K562 (cell line): ENCODE measurements at regions of chr6 and their contacts with region 1.

Region 1: GRCh38 chr6:144013486-144013909 is 5.4 kb upstream of the PLAGL1 start:
- DNase-seq: peak; percentile 61 to 88 (median 64)
- ATAC-seq: peak; percentile 92
- H3K4me3 ChIP-seq: no peak overlapping the region
- H3K27ac ChIP-seq: no peak overlapping the region
- H3K4me1 ChIP-seq: peaks cover 0 to 1% of the 10 kb centered on the region in 2 experiments; a peak in 1 of 5 replicates
- H3K27me3 ChIP-seq: peaks cover 0 to 2% of the 10 kb centered on the region in 2 experiments; a peak in 1 of 5 replicates
- CTCF ChIP-seq: peak; percentile 93 to 97 (median 93)
- EP300 ChIP-seq: no peak
- POLR2A ChIP-seq: no peak
- RAD21 ChIP-seq: peak; percentile 98 to 99

Region 2: GRCh38 chr6:143510991-143511891 is 502.3 kb before region 1 on chr6 and contains the start of gene FUCA2:
- CTCF ChIA-PET with region 1: no interaction called
- POLR2A ChIA-PET with region 1: no interaction called
- in situ Hi-C with region 1: no loop called
- intact Hi-C with region 1: loop called (anchors 2 kb)
- DNase-seq: peak; percentile 92 to 98 (median 93)
- ATAC-seq: peak; percentile 96
- H3K4me3 ChIP-seq: peak within 1 kb of the TSS; percentile 66
- H3K27ac ChIP-seq: peak within 1 kb of the TSS; percentile 91
- H3K4me1 ChIP-seq: peaks cover 10 to 16% of the 10 kb centered on the region in 2 experiments; a peak in 4 of 5 replicates
- H3K27me3 ChIP-seq: no peaks in the 10 kb centered on the region
- CTCF ChIP-seq: peak in 2 of 3 experiments; percentile 6 to 21; a peak in 3 of 6 replicates
- EP300 ChIP-seq: peak; percentile 52
- POLR2A ChIP-seq: peak; percentile 97
- RAD21 ChIP-seq: no peak; a peak in 1 of 4 replicates
- polyA plus RNA-seq, gene FUCA2: 20.6 to 23.9 TPM

Region 3: GRCh38 chr6:143592335-143592734 is 421.2 kb before region 1 on chr6:
- CTCF ChIA-PET with region 1: interaction called, 5 read pairs
- POLR2A ChIA-PET with region 1: no interaction called
- in situ Hi-C with region 1: no loop called
- intact Hi-C with region 1: loop called (anchors 1 kb)
- DNase-seq: peak; percentile 70 to 75 (median 72)
- ATAC-seq: peak; percentile 91
- H3K4me3 ChIP-seq: no peak overlapping the region
- H3K27ac ChIP-seq: no peak overlapping the region
- H3K4me1 ChIP-seq: no peaks in the 10 kb centered on the region
- H3K27me3 ChIP-seq: no peaks in the 10 kb centered on the region
- CTCF ChIP-seq: peak; percentile 66 to 83 (median 77)
- EP300 ChIP-seq: no peak
- POLR2A ChIP-seq: no peak
- RAD21 ChIP-seq: peak; percentile 65 to 83

Region 4: DNA sequence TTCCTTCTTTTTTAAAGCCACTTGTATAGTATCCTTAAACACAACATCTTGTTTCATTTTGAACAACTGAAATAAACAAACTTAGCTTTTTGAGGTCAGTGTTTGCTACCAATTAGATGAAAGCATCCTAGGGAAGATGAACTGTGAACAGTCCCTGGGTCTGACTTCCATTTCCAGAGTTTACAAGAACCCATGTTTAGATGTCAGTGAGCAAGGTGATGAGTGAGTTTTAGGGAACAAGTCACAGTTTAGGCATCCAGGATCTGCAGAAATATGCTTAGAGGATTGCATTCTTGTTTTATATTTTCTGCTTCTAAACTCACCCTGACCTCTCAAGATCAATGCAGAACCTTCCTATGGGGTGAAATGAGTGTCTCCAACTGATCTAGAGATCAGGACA is 146.3 kb before region 1 on chr6:
- CTCF ChIA-PET with region 1: no interaction called
- POLR2A ChIA-PET with region 1: no interaction called
- in situ Hi-C with region 1: no loop called
- intact Hi-C with region 1: loop called (anchors 10 kb)
- DNase-seq: no peak
- ATAC-seq: no peak
- H3K4me3 ChIP-seq: no peak overlapping the region
- H3K27ac ChIP-seq: no peak overlapping the region
- H3K4me1 ChIP-seq: no peaks in the 10 kb centered on the region
- H3K27me3 ChIP-seq: no peaks in the 10 kb centered on the region
- CTCF ChIP-seq: no peak
- EP300 ChIP-seq: no peak
- POLR2A ChIP-seq: no peak
- RAD21 ChIP-seq: no peak

Region 5: GRCh38 chr6:143929975-143930374 is 83.5 kb before region 1 on chr6:
- CTCF ChIA-PET with region 1: no interaction called
- POLR2A ChIA-PET with region 1: no interaction called
- in situ Hi-C with region 1: no loop called
- intact Hi-C with region 1: no loop called
- DNase-seq: no peak
- ATAC-seq: no peak
- H3K4me3 ChIP-seq: no peak overlapping the region
- H3K27ac ChIP-seq: no peak overlapping the region
- H3K4me1 ChIP-seq: no peaks in the 10 kb centered on the region
- H3K27me3 ChIP-seq: peaks cover 0 to 5% of the 10 kb centered on the region in 2 experiments; a peak in 1 of 5 replicates
- CTCF ChIP-seq: no peak
- EP300 ChIP-seq: no peak
- POLR2A ChIP-seq: no peak
- RAD21 ChIP-seq: no peak

Region 6: GRCh38 chr6:144095331-144096002 is 82.0 kb after region 1 on chr6 and contains the start of gene SF3B5:
- CTCF ChIA-PET with region 1: no interaction called
- POLR2A ChIA-PET with region 1: no interaction called
- in situ Hi-C with region 1: no loop called
- intact Hi-C with region 1: loop called (anchors 2 kb)
- DNase-seq: peak; percentile 95 to 100 (median 96)
- ATAC-seq: peak; percentile 97
- H3K4me3 ChIP-seq: peak within 1 kb of the TSS; percentile 98
- H3K27ac ChIP-seq: peak within 1 kb of the TSS; percentile 91
- H3K4me1 ChIP-seq: peaks cover 10 to 13% of the 10 kb centered on the region in 2 experiments; a peak in 3 of 5 replicates
- H3K27me3 ChIP-seq: no peaks in the 10 kb centered on the region; a peak in 1 of 5 replicates
- CTCF ChIP-seq: no peak; a peak in 1 of 6 replicates
- EP300 ChIP-seq: peak; percentile 51; the same call in 1 of the 2 replicates
- POLR2A ChIP-seq: peak; percentile 99
- RAD21 ChIP-seq: peak in 1 of 2 experiments; percentile 5; a peak in 1 of 4 replicates
- polyA plus RNA-seq, gene SF3B5: 1,065 to 1,211 TPM

Region 7: GRCh38 chr6:144285798-144286502 is 272.5 kb after region 1 on chr6:
- CTCF ChIA-PET with region 1: no interaction called
- POLR2A ChIA-PET with region 1: no interaction called
- in situ Hi-C with region 1: no loop called
- intact Hi-C with region 1: no loop called
- DNase-seq: peak in 2 of 4 experiments; percentile 11 to 35
- ATAC-seq: peak; percentile 56
- H3K4me3 ChIP-seq: peak overlapping the region; percentile 38; the same call in 1 of the 2 replicates
- H3K27ac ChIP-seq: no peak overlapping the region
- H3K4me1 ChIP-seq: peaks cover 0 to 27% of the 10 kb centered on the region in 2 experiments; a peak in 3 of 5 replicates
- H3K27me3 ChIP-seq: peaks cover 34 to 35% of the 10 kb centered on the region in 2 experiments
- CTCF ChIP-seq: no peak
- EP300 ChIP-seq: no peak
- POLR2A ChIP-seq: no peak
- RAD21 ChIP-seq: no peak

Region 8: DNA sequence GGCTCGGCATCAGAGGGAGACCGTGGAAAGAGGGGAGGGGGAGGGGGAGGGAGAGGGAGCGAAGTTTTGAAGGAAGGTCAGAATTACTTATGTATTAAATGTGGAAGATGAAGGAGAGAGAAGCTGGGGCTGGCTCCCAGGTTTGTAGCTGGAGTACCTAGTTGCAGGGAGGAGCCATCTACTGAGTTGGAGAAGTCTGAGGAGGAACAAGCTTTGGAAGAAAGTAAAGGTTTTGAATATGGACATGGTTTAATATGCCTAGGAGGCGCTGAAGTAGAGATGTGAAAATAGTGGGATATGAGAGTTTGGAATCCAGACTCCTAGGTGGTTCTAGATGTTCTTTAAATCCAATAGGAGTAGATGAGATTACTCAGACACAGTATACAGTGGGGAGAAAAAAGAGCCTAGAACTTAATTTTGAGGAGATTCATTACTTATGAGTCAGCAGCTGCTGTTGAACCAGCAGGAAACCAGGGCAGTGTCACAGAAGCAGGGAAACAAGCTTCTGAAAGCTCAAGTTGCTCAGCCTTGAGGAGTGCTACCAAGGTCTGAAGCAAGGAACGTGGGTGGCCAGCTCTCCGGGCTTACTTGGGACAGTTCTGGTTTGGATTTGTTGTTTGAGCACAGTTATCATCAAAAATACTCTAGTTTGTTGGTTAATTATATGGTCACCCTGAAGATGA is 421.0 kb after region 1 on chr6:
- CTCF ChIA-PET with region 1: no interaction called
- POLR2A ChIA-PET with region 1: no interaction called
- in situ Hi-C with region 1: no loop called
- intact Hi-C with region 1: no loop called
- DNase-seq: peak in 1 of 4 experiments; percentile 27
- ATAC-seq: no peak; the same call in 2 of the 3 replicates
- H3K4me3 ChIP-seq: no peak overlapping the region
- H3K27ac ChIP-seq: no peak overlapping the region
- H3K4me1 ChIP-seq: no peaks in the 10 kb centered on the region
- H3K27me3 ChIP-seq: no peaks in the 10 kb centered on the region
- CTCF ChIP-seq: no peak
- EP300 ChIP-seq: no peak
- POLR2A ChIP-seq: no peak
- RAD21 ChIP-seq: no peak